Heart left ventricle (tissue), 16 donors: ENCODE measurements at regions of chr6 and their contacts with region 1.

Region 1: DNA sequence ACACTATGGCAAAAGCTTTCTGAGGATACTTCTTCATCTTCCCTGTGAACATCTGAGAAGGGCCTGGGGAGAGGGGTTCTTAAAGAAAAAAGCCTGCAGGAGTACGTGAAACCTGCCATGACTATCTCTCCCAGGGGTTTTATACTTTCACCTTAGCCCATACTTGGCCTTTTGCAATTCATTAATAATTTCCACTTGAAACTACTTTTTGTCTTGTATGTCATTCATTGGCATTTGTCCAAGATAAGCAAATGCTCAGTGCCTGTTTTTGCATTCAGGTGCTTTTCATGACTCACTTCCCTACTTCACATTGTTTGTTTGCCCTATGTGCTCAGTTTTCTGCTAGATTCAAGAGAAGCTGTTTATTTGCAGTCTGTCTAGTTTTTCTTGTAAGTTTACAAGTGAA is 580.2 kb upstream of the GJE1 start:
- DNase-seq: no peak
- ATAC-seq: peak in 2 of 4 donors; percentile 58 to 89
- H3K4me3 ChIP-seq: no peak overlapping the region
- H3K27ac ChIP-seq: peak overlapping the region in 11 of 12 donors; percentile 16 to 61 (median 50)
- H3K4me1 ChIP-seq: peaks cover 0 to 14% (median 2%) of the 10 kb centered on the region in 12 donors
- H3K27me3 ChIP-seq: no peaks in the 10 kb centered on the region
- CTCF ChIP-seq: no peak
- POLR2A ChIP-seq: no peak

Region 2: DNA sequence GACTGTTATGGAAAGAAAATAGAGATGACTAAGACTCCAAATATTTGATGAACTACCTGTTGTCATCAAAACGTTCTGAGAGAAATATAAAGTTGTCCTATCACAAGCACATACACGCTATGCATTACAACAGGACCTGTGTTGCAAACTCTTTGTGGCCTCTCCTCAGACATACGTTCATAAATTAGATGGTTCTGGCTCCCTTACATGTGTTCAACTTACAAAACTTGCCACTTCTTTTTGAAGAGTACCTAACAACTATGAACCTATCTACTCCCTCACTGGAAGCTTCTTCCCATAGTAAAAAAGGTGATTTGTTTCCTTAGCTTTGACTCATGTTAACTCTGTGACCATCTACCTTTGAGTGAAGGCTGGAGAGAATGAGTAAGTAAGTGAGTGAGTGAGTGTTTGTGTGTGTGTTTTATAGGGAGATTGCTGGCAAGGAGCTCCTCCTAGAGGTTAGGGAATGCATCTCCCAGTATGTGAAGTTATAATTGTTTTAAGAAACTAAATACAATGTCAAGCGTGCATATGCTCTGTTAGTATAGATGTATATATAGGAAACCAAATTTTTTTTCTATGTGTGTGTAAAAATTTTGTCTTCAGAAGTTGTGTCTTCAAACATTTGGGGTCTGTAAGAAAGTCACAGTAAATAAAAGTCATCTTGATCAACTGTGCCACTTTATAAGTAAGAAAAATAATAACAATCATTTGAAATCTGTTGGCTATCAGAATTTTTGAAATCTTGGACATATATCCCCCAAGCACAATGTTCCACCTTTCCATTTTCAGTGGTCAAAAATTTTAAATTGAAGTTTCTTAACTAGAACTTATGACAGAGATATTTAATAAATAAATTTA is 630.9 kb before region 1 on chr6:
- intact Hi-C with region 1: loop called in 1 of 10 experiments (anchors 10 kb)
- DNase-seq: peak in 1 of 5 donors; percentile 21
- ATAC-seq: peak in 3 of 4 donors; percentile 74 to 78 (median 78)
- H3K4me3 ChIP-seq: no peak overlapping the region
- H3K27ac ChIP-seq: no peak overlapping the region
- H3K4me1 ChIP-seq: no peaks in the 10 kb centered on the region
- H3K27me3 ChIP-seq: no peaks in the 10 kb centered on the region
- CTCF ChIP-seq: peak in 11 of 12 donors; percentile 41 to 74 (median 57)
- POLR2A ChIP-seq: no peak

Region 3: DNA sequence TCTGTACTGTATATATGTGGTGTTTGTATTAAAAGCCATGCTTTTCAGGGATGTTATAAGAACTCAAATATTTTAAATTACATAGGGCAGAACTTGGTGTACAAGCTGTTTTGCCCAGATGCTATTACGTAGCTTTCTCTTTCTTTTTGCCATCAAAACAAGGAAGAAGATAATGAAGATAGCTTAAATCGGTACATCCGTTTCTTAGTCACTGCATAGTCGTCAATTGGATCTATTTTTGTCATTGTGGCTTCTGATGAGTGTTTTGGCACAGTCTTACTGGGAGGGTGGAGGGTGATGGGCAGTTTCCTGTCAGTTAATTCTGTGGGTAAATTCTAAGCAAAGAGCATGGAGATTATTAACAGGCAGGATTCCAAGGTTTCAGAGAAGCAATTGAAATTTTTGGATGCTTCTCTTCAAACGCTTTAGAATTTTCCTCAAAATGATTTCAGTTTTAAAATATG is 68.8 kb before region 1 on chr6:
- intact Hi-C with region 1: loop called in 4 of 10 experiments (anchors 5 to 10 kb)
- DNase-seq: peak in 3 of 5 donors; percentile 34 to 51 (median 41)
- ATAC-seq: peak; percentile 82 to 97 (median 97)
- H3K4me3 ChIP-seq: peak overlapping the region in 10 of 12 donors; percentile 9 to 45 (median 35)
- H3K27ac ChIP-seq: peak overlapping the region; percentile 38 to 87 (median 64)
- H3K4me1 ChIP-seq: peaks cover 0 to 37% (median 11%) of the 10 kb centered on the region in 12 donors
- H3K27me3 ChIP-seq: no peaks in the 10 kb centered on the region
- CTCF ChIP-seq: no peak
- POLR2A ChIP-seq: no peak